ENCODE measurements at regions of chr13 and their contacts with region 1.

Region 1: GRCh38 chr13:56586966-56587365 is 553.8 kb upstream of the PRR20A start:
- DNase-seq: no peak
- ATAC-seq: no peak
- H3K4me3 ChIP-seq: no peak overlapping the region
- H3K4me3 Mint-ChIP-seq: no peak overlapping the region
- H3K27ac ChIP-seq: no peak overlapping the region
- H3K27ac Mint-ChIP-seq: no peak overlapping the region
- H3K4me1 ChIP-seq: no peaks in the 10 kb centered on the region
- H3K4me1 Mint-ChIP-seq: no peaks in the 10 kb centered on the region
- H3K27me3 ChIP-seq: no peaks in the 10 kb centered on the region
- H3K27me3 Mint-ChIP-seq: no peaks in the 10 kb centered on the region
- CTCF ChIP-seq: no peak

Region 2: GRCh38 chr13:56166864-56167263 is 420.1 kb before region 1 on chr13:
- CTCF ChIA-PET with region 1: no interaction called
- POLR2A ChIA-PET with region 1: no interaction called
- intact Hi-C with region 1: no loop called
- DNase-seq: no peak
- ATAC-seq: no peak
- H3K4me3 ChIP-seq: no peak overlapping the region
- H3K4me3 Mint-ChIP-seq: no peak overlapping the region
- H3K27ac ChIP-seq: no peak overlapping the region
- H3K27ac Mint-ChIP-seq: no peak overlapping the region
- H3K4me1 ChIP-seq: no peaks in the 10 kb centered on the region
- H3K4me1 Mint-ChIP-seq: no peaks in the 10 kb centered on the region
- H3K27me3 ChIP-seq: no peaks in the 10 kb centered on the region
- H3K27me3 Mint-ChIP-seq: no peaks in the 10 kb centered on the region
- CTCF ChIP-seq: no peak

Region 3: GRCh38 chr13:56462901-56463300 is 124.1 kb before region 1 on chr13:
- CTCF ChIA-PET with region 1: no interaction called
- POLR2A ChIA-PET with region 1: no interaction called
- intact Hi-C with region 1: no loop called
- DNase-seq: no peak
- ATAC-seq: no peak
- H3K4me3 ChIP-seq: no peak overlapping the region
- H3K4me3 Mint-ChIP-seq: no peak overlapping the region
- H3K27ac ChIP-seq: no peak overlapping the region
- H3K27ac Mint-ChIP-seq: no peak overlapping the region
- H3K4me1 ChIP-seq: no peaks in the 10 kb centered on the region
- H3K4me1 Mint-ChIP-seq: no peaks in the 10 kb centered on the region
- H3K27me3 ChIP-seq: no peaks in the 10 kb centered on the region
- H3K27me3 Mint-ChIP-seq: no peaks in the 10 kb centered on the region
- CTCF ChIP-seq: no peak

Region 4: DNA sequence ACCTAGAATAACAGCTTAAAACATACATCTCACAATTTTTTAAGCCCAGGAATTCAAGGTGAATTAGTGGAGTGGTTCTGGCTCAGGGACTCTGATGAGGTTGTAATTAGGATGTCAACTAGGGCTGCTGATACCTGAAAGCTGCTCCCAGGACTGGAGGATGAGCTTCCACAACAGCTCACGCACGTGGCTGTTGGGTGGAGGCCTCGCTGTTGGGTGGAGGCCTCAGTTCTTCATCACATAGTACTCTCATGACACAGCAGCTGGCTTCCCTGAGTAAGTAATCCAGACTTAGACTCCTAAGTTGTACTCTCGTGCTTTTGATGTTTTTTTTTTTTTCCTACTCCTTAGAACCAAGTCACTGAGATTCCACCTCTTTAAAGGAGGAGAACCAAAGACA is 23.3 kb before region 1 on chr13:
- CTCF ChIA-PET with region 1: no interaction called
- POLR2A ChIA-PET with region 1: no interaction called
- intact Hi-C with region 1: loop called in 1 of 2 experiments (anchors 1 kb)
- DNase-seq: no peak
- ATAC-seq: no peak
- H3K4me3 ChIP-seq: no peak overlapping the region
- H3K4me3 Mint-ChIP-seq: no peak overlapping the region
- H3K27ac ChIP-seq: no peak overlapping the region
- H3K27ac Mint-ChIP-seq: no peak overlapping the region
- H3K4me1 ChIP-seq: no peaks in the 10 kb centered on the region
- H3K4me1 Mint-ChIP-seq: no peaks in the 10 kb centered on the region
- H3K27me3 ChIP-seq: no peaks in the 10 kb centered on the region
- H3K27me3 Mint-ChIP-seq: no peaks in the 10 kb centered on the region
- CTCF ChIP-seq: no peak

Region 5: DNA sequence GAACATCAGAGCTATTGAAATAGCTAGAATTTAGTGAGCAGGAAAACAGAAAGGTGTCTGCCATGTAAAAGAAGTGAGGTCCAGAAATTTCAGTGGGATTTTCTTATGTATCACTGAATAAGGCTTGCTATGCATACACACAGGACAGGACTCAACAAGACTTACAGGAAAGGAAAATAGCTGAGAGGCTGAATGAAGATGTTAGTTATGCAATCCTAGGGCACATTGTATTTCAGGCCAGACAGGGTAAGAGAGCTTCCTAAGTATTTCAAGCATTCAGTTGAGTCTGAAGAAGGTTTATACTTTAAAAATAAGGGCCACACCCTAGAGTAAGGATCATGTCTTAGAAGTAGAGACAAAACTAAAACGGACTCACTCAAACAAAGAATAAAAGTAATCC is 133.9 kb after region 1 on chr13:
- CTCF ChIA-PET with region 1: no interaction called
- POLR2A ChIA-PET with region 1: no interaction called
- intact Hi-C with region 1: no loop called
- DNase-seq: no peak
- ATAC-seq: no peak
- H3K4me3 ChIP-seq: no peak overlapping the region
- H3K4me3 Mint-ChIP-seq: no peak overlapping the region
- H3K27ac ChIP-seq: no peak overlapping the region
- H3K27ac Mint-ChIP-seq: no peak overlapping the region
- H3K4me1 ChIP-seq: no peaks in the 10 kb centered on the region
- H3K4me1 Mint-ChIP-seq: no peaks in the 10 kb centered on the region
- H3K27me3 ChIP-seq: no peaks in the 10 kb centered on the region
- H3K27me3 Mint-ChIP-seq: no peaks in the 10 kb centered on the region
- CTCF ChIP-seq: no peak

Measured in CD8-positive, alpha-beta T cell (primary cell).